CD8-positive, alpha-beta memory T cell (primary cell): ENCODE measurements at regions of chr17 and their contacts with region 1.

Region 1: GRCh38 chr17:30124273-30124796 is 7.7 kb downstream of the NSRP1 start:
- DNase-seq: no peak
- H3K4me3 ChIP-seq: no peak overlapping the region
- H3K4me3 Mint-ChIP-seq: no peak overlapping the region
- H3K27ac ChIP-seq: no peak overlapping the region
- H3K27ac Mint-ChIP-seq: peak overlapping the region in 5 of 8 donors; percentile 0 to 86 (median 32)
- H3K4me1 ChIP-seq: peaks cover 7% of the 10 kb centered on the region
- H3K4me1 Mint-ChIP-seq: peaks cover 37 to 59% (median 56%) of the 10 kb centered on the region in 3 donors
- H3K27me3 ChIP-seq: no peaks in the 10 kb centered on the region
- H3K27me3 Mint-ChIP-seq: peaks cover 0 to 1% of the 10 kb centered on the region in 2 donors

Region 2: GRCh38 chr17:30148376-30148775 is 24.0 kb after region 1 on chr17:
- CTCF ChIA-PET with region 1: interaction called, 10 read pairs
- POLR2A ChIA-PET with region 1: no interaction called
- DNase-seq: no peak
- H3K4me3 ChIP-seq: no peak overlapping the region
- H3K4me3 Mint-ChIP-seq: no peak overlapping the region
- H3K27ac ChIP-seq: no peak overlapping the region
- H3K27ac Mint-ChIP-seq: peak overlapping the region in 6 of 8 donors; percentile 0 to 60 (median 22)
- H3K4me1 ChIP-seq: no peaks in the 10 kb centered on the region
- H3K4me1 Mint-ChIP-seq: peaks cover 18 to 45% (median 34%) of the 10 kb centered on the region in 3 donors
- H3K27me3 ChIP-seq: no peaks in the 10 kb centered on the region
- H3K27me3 Mint-ChIP-seq: no peaks in the 10 kb centered on the region